WTC11 (cell line): ENCODE measurements at regions of chr11 and their contacts with region 1.

Region 1: DNA sequence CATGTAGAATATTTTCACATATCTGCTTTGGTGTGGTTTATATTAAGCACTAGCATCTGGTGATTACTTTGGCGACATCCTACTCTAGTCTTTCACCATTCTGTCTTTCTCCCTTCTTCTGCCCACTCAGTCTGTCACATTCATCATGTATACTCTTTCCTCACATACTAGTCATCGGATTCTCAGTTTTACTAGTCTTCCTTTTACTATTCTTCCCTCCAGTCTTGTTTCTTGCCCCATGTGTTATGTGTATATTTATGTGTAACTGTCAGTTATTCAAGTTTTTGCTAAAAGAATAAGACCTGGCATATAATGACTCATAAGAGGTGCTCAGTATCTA is 4.6 kb upstream of the DIXDC1 start:
- DNase-seq: no peak
- ATAC-seq: no peak
- H3K4me3 Mint-ChIP-seq: no peak overlapping the region
- H3K27ac Mint-ChIP-seq: no peak overlapping the region
- H3K4me1 Mint-ChIP-seq: peaks cover 19% of the 10 kb centered on the region
- H3K27me3 Mint-ChIP-seq: no peaks in the 10 kb centered on the region
- CTCF ChIP-seq: no peak

Region 2: DNA sequence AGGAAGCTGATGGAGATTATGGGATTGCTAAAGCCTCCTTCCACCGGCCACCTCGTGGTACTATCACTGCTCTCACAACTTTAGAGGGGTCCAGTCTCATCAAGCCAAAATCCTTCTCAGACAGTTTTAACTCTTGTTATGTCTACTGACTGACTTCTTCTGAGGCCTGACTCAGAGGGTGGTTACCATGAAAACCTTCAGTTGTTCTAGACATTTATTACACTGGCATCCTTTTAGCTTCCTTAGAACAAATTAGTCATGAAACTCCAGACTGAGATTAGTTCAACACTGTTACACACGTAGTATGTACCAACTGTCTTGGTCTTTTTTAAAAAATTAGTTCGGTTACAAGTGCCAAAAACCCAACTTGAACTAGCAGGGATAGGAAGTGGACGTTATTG is 12.1 kb after region 1 on chr11:
- CTCF ChIA-PET with region 1: interaction called, 12 read pairs
- POLR2A ChIA-PET with region 1: interaction called, 4 read pairs
- DNase-seq: no peak
- ATAC-seq: no peak
- H3K4me3 Mint-ChIP-seq: no peak overlapping the region
- H3K27ac Mint-ChIP-seq: no peak overlapping the region
- H3K4me1 Mint-ChIP-seq: peaks cover 23% of the 10 kb centered on the region
- H3K27me3 Mint-ChIP-seq: no peaks in the 10 kb centered on the region; the same call in 1 of the 2 replicates
- CTCF ChIP-seq: no peak

Region 3: GRCh38 chr11:111960916-111961315 is 28.3 kb after region 1 on chr11:
- CTCF ChIA-PET with region 1: interaction called, 10 read pairs
- POLR2A ChIA-PET with region 1: interaction called, 3 read pairs
- DNase-seq: peak; percentile 57
- ATAC-seq: peak; percentile 98
- H3K4me3 Mint-ChIP-seq: peak overlapping the region; percentile 39
- H3K27ac Mint-ChIP-seq: peak overlapping the region; percentile 86
- H3K4me1 Mint-ChIP-seq: peaks cover 32% of the 10 kb centered on the region
- H3K27me3 Mint-ChIP-seq: no peaks in the 10 kb centered on the region
- CTCF ChIP-seq: no peak

Region 4: GRCh38 chr11:112211536-112211935 is 279.0 kb after region 1 on chr11:
- CTCF ChIA-PET with region 1: no interaction called
- POLR2A ChIA-PET with region 1: no interaction called
- DNase-seq: no peak
- ATAC-seq: no peak
- H3K4me3 Mint-ChIP-seq: no peak overlapping the region
- H3K27ac Mint-ChIP-seq: no peak overlapping the region
- H3K4me1 Mint-ChIP-seq: no peaks in the 10 kb centered on the region
- H3K27me3 Mint-ChIP-seq: peaks cover 11% of the 10 kb centered on the region
- CTCF ChIP-seq: no peak